CD4-positive, alpha-beta T cell (primary cell): ENCODE measurements at regions of chr2 and their contacts with region 1.

Region 1: DNA sequence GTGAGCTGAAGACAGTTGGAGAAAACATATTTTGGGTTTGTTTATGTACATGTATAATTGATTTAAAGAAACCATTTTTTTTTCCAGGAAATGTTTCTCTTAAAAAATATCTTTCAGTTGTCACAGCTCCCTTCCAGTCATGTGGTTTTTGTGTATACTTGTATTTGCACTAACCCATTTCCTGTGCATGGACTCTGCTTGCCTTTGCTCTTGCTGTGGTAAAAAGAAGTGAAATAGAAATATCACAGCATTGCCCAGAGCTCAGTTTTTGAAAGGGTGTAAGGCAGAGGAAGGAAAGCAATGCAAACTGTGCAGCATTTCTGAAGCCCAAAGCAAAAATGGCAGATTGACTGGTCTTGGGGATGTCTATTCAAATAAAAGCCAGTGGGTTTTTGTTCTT is 10.4 kb upstream of the DOCK10 start:
- DNase-seq: peak in 7 of 14 experiments; percentile 18 to 88 (median 53)
- ATAC-seq: peak; percentile 88
- H3K4me3 ChIP-seq: no peak overlapping the region
- H3K4me3 Mint-ChIP-seq: peak overlapping the region; percentile 70
- H3K27ac ChIP-seq: peak overlapping the region in 1 of 2 donors; percentile 37
- H3K27ac Mint-ChIP-seq: peak overlapping the region; percentile 85
- H3K4me1 ChIP-seq: peaks cover 35% of the 10 kb centered on the region
- H3K4me1 Mint-ChIP-seq: peaks cover 74% of the 10 kb centered on the region
- H3K27me3 ChIP-seq: no peaks in the 10 kb centered on the region
- H3K27me3 Mint-ChIP-seq: no peaks in the 10 kb centered on the region
- CTCF ChIP-seq: no peak

Region 2: DNA sequence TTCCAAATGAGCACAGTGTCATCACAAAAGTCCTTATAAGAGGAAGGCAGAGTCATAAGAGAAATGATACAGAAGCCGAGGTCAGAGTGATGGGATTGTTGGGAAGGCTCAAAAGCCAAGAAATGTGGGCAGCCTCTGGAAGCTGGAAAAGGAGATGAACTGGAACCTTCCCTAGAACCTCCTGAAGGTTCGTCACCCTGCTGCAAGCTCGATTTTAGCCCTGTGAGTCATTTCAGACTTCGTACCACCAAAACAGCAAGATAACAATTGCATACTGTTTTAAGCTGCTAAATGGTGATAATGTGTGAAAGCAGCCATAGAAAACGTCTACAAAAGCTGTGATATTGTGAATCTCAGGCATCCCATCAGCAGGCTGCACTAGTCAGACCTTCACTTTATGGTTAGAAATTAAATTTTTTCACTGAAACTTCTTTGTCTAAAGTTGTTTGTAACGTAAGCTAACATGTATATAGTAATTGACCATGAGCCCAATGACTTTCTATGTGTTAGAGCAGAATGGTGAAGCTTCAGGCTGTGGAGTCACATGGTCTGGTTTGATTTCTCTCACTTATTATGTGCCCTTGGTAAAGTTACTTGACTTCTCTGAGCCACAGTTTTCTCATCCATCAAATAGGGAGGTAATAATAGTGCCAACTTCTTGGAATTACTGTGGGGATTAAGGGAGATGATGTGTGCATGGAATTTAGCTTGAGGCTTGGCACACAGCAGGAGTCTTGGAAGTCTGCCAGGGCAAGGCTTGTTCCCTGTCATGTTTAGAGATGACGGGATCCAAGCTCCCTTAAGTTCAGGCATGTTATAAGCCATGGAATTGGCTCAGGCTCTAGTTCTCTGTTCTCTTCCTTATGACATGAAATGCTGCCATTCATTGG is 204.5 kb before region 1 on chr2:
- CTCF ChIA-PET with region 1: no interaction called
- POLR2A ChIA-PET with region 1: no interaction called
- intact Hi-C with region 1: no loop called
- DNase-seq: no peak
- ATAC-seq: no peak
- H3K4me3 ChIP-seq: no peak overlapping the region
- H3K4me3 Mint-ChIP-seq: no peak overlapping the region
- H3K27ac ChIP-seq: no peak overlapping the region
- H3K27ac Mint-ChIP-seq: no peak overlapping the region
- H3K4me1 ChIP-seq: no peaks in the 10 kb centered on the region
- H3K4me1 Mint-ChIP-seq: peaks cover 5% of the 10 kb centered on the region
- H3K27me3 ChIP-seq: no peaks in the 10 kb centered on the region
- H3K27me3 Mint-ChIP-seq: no peaks in the 10 kb centered on the region
- CTCF ChIP-seq: no peak

Region 3: GRCh38 chr2:225008935-225009334 is 43.8 kb before region 1 on chr2:
- CTCF ChIA-PET with region 1: interaction called, 4 read pairs
- POLR2A ChIA-PET with region 1: interaction called, 3 read pairs
- intact Hi-C with region 1: loop called in 1 of 2 experiments (anchors 5 kb)
- DNase-seq: peak in 2 of 14 experiments; percentile 54
- ATAC-seq: peak; percentile 57
- H3K4me3 ChIP-seq: no peak overlapping the region
- H3K4me3 Mint-ChIP-seq: peak overlapping the region; percentile 26
- H3K27ac ChIP-seq: no peak overlapping the region
- H3K27ac Mint-ChIP-seq: peak overlapping the region; percentile 83
- H3K4me1 ChIP-seq: peaks cover 29% of the 10 kb centered on the region
- H3K4me1 Mint-ChIP-seq: peaks cover 97% of the 10 kb centered on the region
- H3K27me3 ChIP-seq: no peaks in the 10 kb centered on the region
- H3K27me3 Mint-ChIP-seq: no peaks in the 10 kb centered on the region
- CTCF ChIP-seq: peak; percentile 57

Region 4: DNA sequence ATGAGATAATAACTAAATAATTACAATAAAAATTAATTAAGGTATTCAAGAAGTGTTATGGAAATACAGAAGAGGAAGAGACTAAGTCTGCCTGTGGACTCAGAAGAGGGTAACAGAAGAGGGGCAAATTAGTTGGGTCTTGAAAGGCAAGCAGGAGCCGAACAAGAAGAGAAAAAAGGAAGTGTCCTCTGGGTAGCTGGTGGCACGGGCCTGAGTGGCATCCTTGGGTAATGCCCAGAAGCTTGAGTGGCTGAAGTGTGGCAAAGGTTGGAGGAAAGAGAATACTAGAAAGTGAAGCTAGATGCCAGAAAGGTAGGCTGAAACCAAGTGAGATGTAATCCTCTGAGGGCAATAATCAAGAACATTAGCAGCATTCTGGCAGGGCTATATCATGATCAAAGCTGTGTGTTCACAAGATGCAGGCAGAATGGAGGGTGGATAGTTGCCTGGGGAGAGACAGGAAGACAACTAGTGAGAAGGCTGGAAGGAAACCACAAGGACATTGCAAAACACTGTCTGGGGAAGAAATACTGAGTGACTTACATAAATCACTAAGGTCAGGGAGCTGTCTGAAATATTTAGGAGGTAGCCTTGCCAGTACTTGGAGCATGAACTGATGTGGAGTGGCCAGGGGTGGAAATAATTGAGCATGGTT is 26.7 kb before region 1 on chr2:
- CTCF ChIA-PET with region 1: no interaction called
- POLR2A ChIA-PET with region 1: interaction called, 11 read pairs
- intact Hi-C with region 1: no loop called
- DNase-seq: peak in 5 of 14 experiments; percentile 18 to 59 (median 51)
- ATAC-seq: peak; percentile 87
- H3K4me3 ChIP-seq: no peak overlapping the region
- H3K4me3 Mint-ChIP-seq: peak overlapping the region; percentile 42
- H3K27ac ChIP-seq: peak overlapping the region in 1 of 2 donors; percentile 1
- H3K27ac Mint-ChIP-seq: peak overlapping the region; percentile 75
- H3K4me1 ChIP-seq: peaks cover 52% of the 10 kb centered on the region
- H3K4me1 Mint-ChIP-seq: peaks cover 81% of the 10 kb centered on the region
- H3K27me3 ChIP-seq: no peaks in the 10 kb centered on the region
- H3K27me3 Mint-ChIP-seq: no peaks in the 10 kb centered on the region
- CTCF ChIP-seq: no peak

Region 5: DNA sequence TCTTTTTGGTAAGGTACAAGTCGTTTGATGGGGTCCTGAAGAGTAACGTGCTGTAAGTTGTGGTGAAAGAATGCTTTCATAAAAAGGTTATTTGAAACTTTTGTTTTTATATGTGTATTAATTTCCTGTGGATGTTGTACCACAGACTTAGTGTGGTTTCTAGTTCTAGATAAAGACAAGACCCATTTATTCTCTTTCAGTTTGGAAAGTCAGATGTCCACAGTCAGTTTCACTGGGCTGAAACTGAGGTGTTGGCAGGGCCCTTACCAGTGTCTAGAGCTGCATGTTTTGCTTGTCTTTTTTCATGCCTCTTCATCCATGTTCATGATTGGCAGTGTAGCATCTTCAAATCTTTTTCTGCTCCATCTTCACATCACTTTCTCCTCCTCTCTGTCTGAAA is 11.7 kb after region 1 on chr2:
- CTCF ChIA-PET with region 1: no interaction called
- POLR2A ChIA-PET with region 1: interaction called, 10 read pairs
- intact Hi-C with region 1: no loop called
- DNase-seq: peak in 1 of 14 experiments; percentile 45
- ATAC-seq: no peak
- H3K4me3 ChIP-seq: no peak overlapping the region
- H3K4me3 Mint-ChIP-seq: peak overlapping the region; percentile 22
- H3K27ac ChIP-seq: peak overlapping the region in 1 of 2 donors; percentile 23
- H3K27ac Mint-ChIP-seq: peak overlapping the region; percentile 41
- H3K4me1 ChIP-seq: peaks cover 7% of the 10 kb centered on the region
- H3K4me1 Mint-ChIP-seq: peaks cover 48% of the 10 kb centered on the region
- H3K27me3 ChIP-seq: no peaks in the 10 kb centered on the region
- H3K27me3 Mint-ChIP-seq: no peaks in the 10 kb centered on the region
- CTCF ChIP-seq: no peak